WTC11 (cell line): ENCODE measurements at regions of chr2 and their contacts with region 1.

Region 1: GRCh38 chr2:112584134-112584890 is at the start of gene CHCHD5:
- DNase-seq: peak; percentile 90
- ATAC-seq: peak; percentile 88
- H3K4me3 Mint-ChIP-seq: peak within 1 kb of the TSS; percentile 89
- H3K27ac Mint-ChIP-seq: peak within 1 kb of the TSS; percentile 99
- H3K4me1 Mint-ChIP-seq: peaks cover 13% of the 10 kb centered on the region
- H3K27me3 Mint-ChIP-seq: no peaks in the 10 kb centered on the region
- CTCF ChIP-seq: no peak
- total RNA-seq, gene CHCHD5: 33.2 to 36.5 TPM (median 33.7 TPM) in 3 replicates

Region 2: GRCh38 chr2:112542123-112542983 is 42.0 kb before region 1 on chr2 and contains the start of gene POLR1B:
- CTCF ChIA-PET with region 1: no interaction called
- POLR2A ChIA-PET with region 1: no interaction called
- DNase-seq: peak; percentile 86
- ATAC-seq: peak; percentile 86
- H3K4me3 Mint-ChIP-seq: no peak within 1 kb of the TSS
- H3K27ac Mint-ChIP-seq: no peak within 1 kb of the TSS; the same call in 1 of the 2 replicates
- H3K4me1 Mint-ChIP-seq: peaks cover 4% of the 10 kb centered on the region; the same call in 1 of the 2 replicates
- H3K27me3 Mint-ChIP-seq: 0 out of 2 replicates have a peak, but pooled peaks cover 4% of the 10 kb centered on the region
- CTCF ChIP-seq: no peak
- total RNA-seq, gene POLR1B: 42.8 to 51.2 TPM (median 50.2 TPM) in 3 replicates

Region 3: GRCh38 chr2:112606488-112606902 is 22.2 kb after region 1 on chr2:
- CTCF ChIA-PET with region 1: no interaction called
- POLR2A ChIA-PET with region 1: no interaction called
- DNase-seq: no peak
- ATAC-seq: no peak
- H3K4me3 Mint-ChIP-seq: no peak overlapping the region
- H3K27ac Mint-ChIP-seq: peak overlapping the region; percentile 3; the same call in 1 of the 2 replicates
- H3K4me1 Mint-ChIP-seq: no peaks in the 10 kb centered on the region
- H3K27me3 Mint-ChIP-seq: peaks cover 10% of the 10 kb centered on the region
- CTCF ChIP-seq: no peak

Region 4: GRCh38 chr2:112733456-112733855 is 149.1 kb after region 1 on chr2:
- CTCF ChIA-PET with region 1: no interaction called
- POLR2A ChIA-PET with region 1: interaction called, 10 read pairs
- DNase-seq: no peak
- ATAC-seq: no peak
- H3K4me3 Mint-ChIP-seq: no peak overlapping the region
- H3K27ac Mint-ChIP-seq: no peak overlapping the region
- H3K4me1 Mint-ChIP-seq: no peaks in the 10 kb centered on the region
- H3K27me3 Mint-ChIP-seq: no peaks in the 10 kb centered on the region
- CTCF ChIP-seq: no peak